CD8-positive, alpha-beta T cell (primary cell): ENCODE measurements at regions of chr7 and their contacts with region 1.

Region 1: DNA sequence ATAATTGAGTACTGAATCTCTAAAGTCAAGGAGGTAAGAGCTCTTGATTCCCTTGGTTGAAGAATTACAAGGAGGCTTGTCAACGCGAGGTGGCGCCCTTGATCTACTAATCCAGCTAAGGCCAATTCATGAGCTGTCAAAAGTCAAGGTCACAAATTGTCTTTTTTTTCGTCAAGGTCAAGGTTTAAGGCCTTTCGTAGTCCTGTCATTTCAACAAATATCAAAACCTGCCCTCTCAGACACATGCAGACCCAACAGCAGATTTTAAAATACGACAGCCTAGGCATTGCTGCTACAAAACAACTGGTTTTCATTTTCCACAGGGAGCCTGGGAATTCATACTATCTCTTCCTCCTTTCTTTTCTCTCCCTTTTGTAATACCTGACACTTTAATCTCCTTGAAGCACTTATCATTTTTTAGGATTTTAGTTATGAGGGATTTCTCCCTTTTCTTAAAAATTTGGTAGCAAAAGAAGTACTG is 3.6 kb downstream of the HOXA13 start:
- DNase-seq: peak; percentile 67 to 89 (median 83)
- ATAC-seq: no peak
- H3K4me3 ChIP-seq: no peak overlapping the region
- H3K4me3 Mint-ChIP-seq: no peak overlapping the region
- H3K27ac ChIP-seq: no peak overlapping the region
- H3K27ac Mint-ChIP-seq: no peak overlapping the region
- H3K4me1 ChIP-seq: peaks cover 46% of the 10 kb centered on the region
- H3K4me1 Mint-ChIP-seq: peaks cover 33% of the 10 kb centered on the region
- H3K27me3 ChIP-seq: peaks cover 69 to 71% of the 10 kb centered on the region in 2 experiments
- H3K27me3 Mint-ChIP-seq: peaks cover 80% of the 10 kb centered on the region
- CTCF ChIP-seq: peak; percentile 78

Region 2: DNA sequence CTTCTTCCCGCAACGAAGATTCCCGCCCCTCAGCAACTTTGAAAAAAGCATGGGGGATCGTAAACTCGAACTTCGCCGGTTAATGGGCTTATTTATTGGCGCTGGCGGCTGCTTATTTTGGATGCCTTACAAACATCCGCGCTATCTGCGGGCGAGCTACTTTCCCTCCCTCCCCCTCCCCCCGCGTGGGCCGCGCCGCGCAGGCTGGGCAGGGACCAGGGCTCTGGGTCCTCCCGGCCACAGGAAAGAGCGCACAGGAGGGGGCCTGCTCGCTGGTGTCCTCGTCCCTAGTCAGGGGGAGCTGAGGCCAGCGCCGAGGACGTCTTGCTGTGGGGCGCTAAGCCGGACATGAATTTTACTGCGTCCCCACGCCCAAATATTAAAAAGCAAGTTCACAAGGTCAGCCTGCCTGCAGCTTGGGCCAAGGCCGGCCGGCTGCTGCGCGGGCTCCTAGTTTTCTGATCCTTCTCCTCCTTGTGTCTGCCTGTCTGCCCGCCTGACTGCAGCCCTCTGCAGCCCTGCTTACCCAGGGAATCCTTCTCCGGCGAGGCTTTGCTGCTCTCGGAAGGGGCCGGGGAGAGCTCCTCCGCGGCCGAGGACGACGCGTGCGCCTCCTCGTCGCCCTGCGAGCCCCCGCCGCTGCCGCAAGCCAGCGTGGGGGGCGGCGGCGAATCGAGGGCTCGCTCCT is 23.4 kb before region 1 on chr7:
- CTCF ChIA-PET with region 1: interaction called, 15 read pairs
- POLR2A ChIA-PET with region 1: no interaction called
- intact Hi-C with region 1: no loop called
- DNase-seq: peak in 1 of 9 experiments; percentile 56
- ATAC-seq: peak; percentile 34
- H3K4me3 ChIP-seq: peak overlapping the region; percentile 27 to 45
- H3K4me3 Mint-ChIP-seq: peak overlapping the region; percentile 47
- H3K27ac ChIP-seq: no peak overlapping the region
- H3K27ac Mint-ChIP-seq: no peak overlapping the region
- H3K4me1 ChIP-seq: peaks cover 34% of the 10 kb centered on the region
- H3K4me1 Mint-ChIP-seq: peaks cover 31% of the 10 kb centered on the region
- H3K27me3 ChIP-seq: peaks cover 58 to 65% of the 10 kb centered on the region in 2 experiments
- H3K27me3 Mint-ChIP-seq: peaks cover 62% of the 10 kb centered on the region
- CTCF ChIP-seq: no peak

Region 3: GRCh38 chr7:27210441-27211083 is 14.2 kb after region 1 on chr7:
- CTCF ChIA-PET with region 1: interaction called, 12 read pairs
- POLR2A ChIA-PET with region 1: interaction called, 4 read pairs
- intact Hi-C with region 1: no loop called
- DNase-seq: peak in 5 of 9 experiments; percentile 42 to 58 (median 54)
- ATAC-seq: peak; percentile 72
- H3K4me3 ChIP-seq: no peak overlapping the region
- H3K4me3 Mint-ChIP-seq: peak overlapping the region; percentile 71
- H3K27ac ChIP-seq: no peak overlapping the region
- H3K27ac Mint-ChIP-seq: no peak overlapping the region
- H3K4me1 ChIP-seq: peaks cover 13% of the 10 kb centered on the region
- H3K4me1 Mint-ChIP-seq: peaks cover 15% of the 10 kb centered on the region
- H3K27me3 ChIP-seq: peaks cover 41 to 56% of the 10 kb centered on the region in 2 experiments
- H3K27me3 Mint-ChIP-seq: peaks cover 86% of the 10 kb centered on the region
- CTCF ChIP-seq: peak; percentile 71

Region 4: DNA sequence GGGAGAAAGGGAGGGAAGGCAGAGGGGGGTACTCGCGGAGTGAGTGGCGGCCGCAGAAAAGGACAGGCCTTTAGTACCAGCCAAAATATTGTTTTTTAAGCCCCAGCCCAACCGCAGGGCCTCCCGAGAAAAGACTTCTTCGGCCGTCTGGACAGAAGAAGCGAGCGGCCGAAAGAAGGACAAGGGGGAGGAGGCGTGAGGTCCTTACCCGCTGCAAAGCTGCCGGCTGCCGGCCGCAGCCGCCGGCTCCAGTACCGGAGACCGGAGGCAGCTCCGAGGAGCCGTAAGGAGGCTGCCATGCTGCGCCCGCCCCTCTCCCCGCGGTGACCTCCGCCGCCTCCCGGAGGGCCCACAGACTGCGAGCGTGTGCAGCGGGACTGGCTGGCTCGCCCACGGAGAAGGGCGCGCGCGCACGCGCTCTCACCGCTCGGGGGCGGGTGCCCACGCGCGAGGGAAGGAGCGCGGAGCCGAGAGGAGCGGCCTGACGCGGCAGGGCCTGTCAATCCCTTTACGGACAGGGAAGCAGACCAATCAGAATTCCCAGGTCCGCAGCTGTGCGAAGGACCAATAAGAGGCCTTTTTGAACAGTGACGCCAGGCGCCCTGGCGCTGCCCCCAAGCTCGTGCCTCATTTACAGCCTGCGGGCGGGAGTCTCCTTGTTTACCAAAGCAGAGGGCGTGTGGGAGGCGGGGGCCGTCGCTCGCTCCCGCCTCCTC is 466.3 kb after region 1 on chr7 and contains the start of gene HIBADH:
- CTCF ChIA-PET with region 1: no interaction called
- POLR2A ChIA-PET with region 1: no interaction called
- intact Hi-C with region 1: loop called (anchors 5 kb)
- DNase-seq: peak; percentile 90 to 99 (median 94)
- ATAC-seq: peak; percentile 92
- H3K4me3 ChIP-seq: peak within 1 kb of the TSS; percentile 70 to 97
- H3K4me3 Mint-ChIP-seq: peak within 1 kb of the TSS; percentile 88
- H3K27ac ChIP-seq: peak within 1 kb of the TSS; percentile 79 to 84
- H3K27ac Mint-ChIP-seq: peak within 1 kb of the TSS; percentile 94
- H3K4me1 ChIP-seq: peaks cover 20% of the 10 kb centered on the region
- H3K4me1 Mint-ChIP-seq: peaks cover 33% of the 10 kb centered on the region
- H3K27me3 ChIP-seq: no peaks in the 10 kb centered on the region
- H3K27me3 Mint-ChIP-seq: no peaks in the 10 kb centered on the region
- CTCF ChIP-seq: no peak
- total RNA-seq, gene HIBADH: 6.8 to 7.3 TPM

Region 5: GRCh38 chr7:27921081-27921836 is 724.9 kb after region 1 on chr7:
- CTCF ChIA-PET with region 1: interaction called, 7 read pairs
- POLR2A ChIA-PET with region 1: no interaction called
- intact Hi-C with region 1: loop called (anchors 1 to 2 kb)
- DNase-seq: peak in 2 of 9 experiments; percentile 48 to 63
- ATAC-seq: no peak
- H3K4me3 ChIP-seq: no peak overlapping the region
- H3K4me3 Mint-ChIP-seq: no peak overlapping the region
- H3K27ac ChIP-seq: no peak overlapping the region
- H3K27ac Mint-ChIP-seq: no peak overlapping the region
- H3K4me1 ChIP-seq: no peaks in the 10 kb centered on the region
- H3K4me1 Mint-ChIP-seq: no peaks in the 10 kb centered on the region
- H3K27me3 ChIP-seq: no peaks in the 10 kb centered on the region
- H3K27me3 Mint-ChIP-seq: no peaks in the 10 kb centered on the region
- CTCF ChIP-seq: peak; percentile 25

Region 6: GRCh38 chr7:28096713-28097112 is 900.4 kb after region 1 on chr7:
- CTCF ChIA-PET with region 1: interaction called, 9 read pairs
- POLR2A ChIA-PET with region 1: no interaction called
- intact Hi-C with region 1: loop called (anchors 1 kb)
- DNase-seq: peak in 6 of 9 experiments; percentile 11 to 73 (median 46)
- ATAC-seq: peak; percentile 55
- H3K4me3 ChIP-seq: no peak overlapping the region
- H3K4me3 Mint-ChIP-seq: no peak overlapping the region
- H3K27ac ChIP-seq: no peak overlapping the region
- H3K27ac Mint-ChIP-seq: no peak overlapping the region
- H3K4me1 ChIP-seq: no peaks in the 10 kb centered on the region
- H3K4me1 Mint-ChIP-seq: peaks cover 4% of the 10 kb centered on the region
- H3K27me3 ChIP-seq: no peaks in the 10 kb centered on the region
- H3K27me3 Mint-ChIP-seq: no peaks in the 10 kb centered on the region
- CTCF ChIP-seq: peak; percentile 96